Heart left ventricle (tissue), 16 donors: ENCODE measurements at regions of chr18 and their contacts with region 1.

Region 1: GRCh38 chr18:75209129-75209950 is at the start of gene PTGR3:
- DNase-seq: peak; percentile 92 to 94 (median 93)
- ATAC-seq: peak; percentile 65 to 84 (median 75)
- H3K4me3 ChIP-seq: peak within 1 kb of the TSS; percentile 61 to 99 (median 96)
- H3K27ac ChIP-seq: peak within 1 kb of the TSS; percentile 96 to 100 (median 99)
- H3K4me1 ChIP-seq: peaks cover 7 to 63% (median 53%) of the 10 kb centered on the region in 12 donors
- H3K27me3 ChIP-seq: no peaks in the 10 kb centered on the region
- CTCF ChIP-seq: no peak
- POLR2A ChIP-seq: peak in 1 of 2 donors; percentile 56
- total RNA-seq, gene PTGR3: 35.3 to 58.2 (median 49.4) TPM

Region 2: DNA sequence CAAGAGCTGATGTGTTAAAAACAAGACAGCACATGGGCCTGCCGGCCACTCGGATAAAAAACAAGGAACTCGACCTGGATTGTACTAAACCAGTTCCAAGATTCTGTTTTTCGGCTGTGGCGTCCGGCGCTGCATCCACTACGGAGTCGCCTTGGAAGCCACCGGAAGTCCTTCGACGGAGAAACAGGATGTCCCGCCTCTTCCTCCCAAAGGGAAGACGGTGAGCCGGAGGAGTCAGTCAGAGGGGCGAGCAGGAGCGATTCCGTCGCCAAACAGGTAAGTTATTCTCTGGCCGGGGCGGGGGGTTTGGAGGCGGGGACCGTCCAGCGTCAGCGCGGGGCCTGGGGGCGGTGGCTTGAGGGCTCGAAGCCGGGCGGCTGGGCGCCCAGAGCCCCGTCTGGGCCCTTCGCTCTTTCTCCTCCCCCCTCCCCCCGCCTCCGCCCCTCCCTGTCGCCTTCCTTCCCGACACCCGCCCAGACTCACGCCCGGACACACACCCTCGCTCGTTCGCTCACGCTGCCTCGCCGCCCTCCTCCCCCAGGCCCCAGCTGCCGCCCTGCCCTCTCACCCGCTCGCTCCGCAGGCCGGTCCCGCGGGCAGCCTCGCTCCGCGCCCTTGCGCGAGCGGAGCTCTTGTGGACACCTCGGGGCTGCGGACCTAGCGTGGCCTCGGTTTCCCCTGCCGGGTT is 611.5 kb before region 1 on chr18 and contains the start of gene ZNF407:
- intact Hi-C with region 1: loop called in 1 of 10 experiments (anchors 5 kb)
- DNase-seq: peak; percentile 90 to 91 (median 90)
- ATAC-seq: peak; percentile 89 to 95 (median 93)
- H3K4me3 ChIP-seq: peak within 1 kb of the TSS; percentile 66 to 96 (median 86)
- H3K27ac ChIP-seq: peak within 1 kb of the TSS; percentile 93 to 99 (median 98)
- H3K4me1 ChIP-seq: peaks cover 3 to 38% (median 27%) of the 10 kb centered on the region in 12 donors
- H3K27me3 ChIP-seq: no peaks in the 10 kb centered on the region
- CTCF ChIP-seq: no peak
- POLR2A ChIP-seq: no peak
- total RNA-seq, gene ZNF407: 8.1 to 14.7 (median 12.3) TPM

Region 3: GRCh38 chr18:75041586-75041985 is 167.8 kb before region 1 on chr18:
- intact Hi-C with region 1: loop called in 1 of 10 experiments (anchors 10 kb)
- DNase-seq: no peak
- ATAC-seq: no peak
- H3K4me3 ChIP-seq: no peak overlapping the region
- H3K27ac ChIP-seq: no peak overlapping the region
- H3K4me1 ChIP-seq: peaks cover 0 to 10% (median 0%) of the 10 kb centered on the region in 12 donors
- H3K27me3 ChIP-seq: no peaks in the 10 kb centered on the region
- CTCF ChIP-seq: peak in 9 of 12 donors; percentile 7 to 33 (median 22)
- POLR2A ChIP-seq: no peak

Region 4: GRCh38 chr18:75167759-75168618 is 41.4 kb before region 1 on chr18:
- intact Hi-C with region 1: loop called in 5 of 10 experiments (anchors 2 to 5 kb)
- DNase-seq: peak; percentile 37 to 78 (median 44)
- ATAC-seq: peak in 3 of 4 donors; percentile 41 to 58 (median 44)
- H3K4me3 ChIP-seq: peak overlapping the region in 10 of 12 donors; percentile 7 to 40 (median 32)
- H3K27ac ChIP-seq: peak overlapping the region in 11 of 12 donors; percentile 19 to 92 (median 61)
- H3K4me1 ChIP-seq: peaks cover 0 to 23% (median 7%) of the 10 kb centered on the region in 12 donors
- H3K27me3 ChIP-seq: no peaks in the 10 kb centered on the region
- CTCF ChIP-seq: no peak
- POLR2A ChIP-seq: no peak

Region 5: DNA sequence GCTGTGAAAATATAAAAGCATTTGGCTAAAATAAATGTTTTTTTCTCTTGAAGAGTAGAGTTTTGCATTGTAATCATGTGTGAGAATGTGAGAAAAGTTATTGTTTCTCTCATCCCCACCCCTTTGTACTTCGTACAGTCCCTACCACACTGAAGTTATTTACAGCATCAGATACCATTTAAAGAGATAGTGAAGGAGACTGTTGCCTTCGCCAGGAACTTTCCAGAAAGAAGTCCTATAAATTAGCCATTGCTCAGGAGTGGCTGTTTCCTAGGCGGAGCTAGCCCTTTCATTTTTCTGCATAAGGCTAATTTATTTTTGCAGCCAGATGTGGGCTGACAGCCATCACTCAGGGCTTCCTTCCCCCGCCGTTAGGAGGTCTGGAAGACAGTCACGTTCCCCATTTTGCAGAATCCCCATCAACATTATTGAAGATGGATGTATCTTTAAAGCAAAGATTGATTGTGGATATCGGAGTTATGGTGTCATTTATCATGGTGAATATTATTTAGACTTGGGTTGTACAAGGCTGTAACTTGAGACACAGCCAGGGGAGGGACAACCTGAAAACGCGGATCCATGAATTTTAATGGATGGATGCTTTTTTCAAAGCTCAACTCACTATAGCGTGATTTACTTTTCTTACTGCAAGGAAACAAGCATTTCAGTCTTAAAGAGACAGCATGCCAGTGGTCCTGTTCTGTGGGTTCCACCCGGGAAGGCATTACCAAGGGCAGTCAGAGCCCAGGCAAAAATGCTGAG is 18.4 kb after region 1 on chr18:
- intact Hi-C with region 1: loop called in 1 of 10 experiments (anchors 1 kb)
- DNase-seq: no peak
- ATAC-seq: peak; percentile 30 to 56 (median 43)
- H3K4me3 ChIP-seq: peak overlapping the region in 8 of 12 donors; percentile 13 to 46 (median 35)
- H3K27ac ChIP-seq: peak overlapping the region in 10 of 12 donors; percentile 13 to 60 (median 50)
- H3K4me1 ChIP-seq: peaks cover 0 to 66% (median 47%) of the 10 kb centered on the region in 12 donors
- H3K27me3 ChIP-seq: no peaks in the 10 kb centered on the region
- CTCF ChIP-seq: no peak
- POLR2A ChIP-seq: no peak

Region 6: GRCh38 chr18:75253784-75254183 is 44.4 kb after region 1 on chr18:
- intact Hi-C with region 1: loop called in 5 of 10 experiments (anchors 2 to 5 kb)
- DNase-seq: no peak
- ATAC-seq: peak in 2 of 4 donors; percentile 50 to 71
- H3K4me3 ChIP-seq: peak overlapping the region in 3 of 12 donors; percentile 0 to 29 (median 22)
- H3K27ac ChIP-seq: peak overlapping the region in 8 of 12 donors; percentile 19 to 64 (median 41)
- H3K4me1 ChIP-seq: peaks cover 0 to 70% (median 40%) of the 10 kb centered on the region in 12 donors
- H3K27me3 ChIP-seq: no peaks in the 10 kb centered on the region
- CTCF ChIP-seq: no peak
- POLR2A ChIP-seq: no peak

Region 7: DNA sequence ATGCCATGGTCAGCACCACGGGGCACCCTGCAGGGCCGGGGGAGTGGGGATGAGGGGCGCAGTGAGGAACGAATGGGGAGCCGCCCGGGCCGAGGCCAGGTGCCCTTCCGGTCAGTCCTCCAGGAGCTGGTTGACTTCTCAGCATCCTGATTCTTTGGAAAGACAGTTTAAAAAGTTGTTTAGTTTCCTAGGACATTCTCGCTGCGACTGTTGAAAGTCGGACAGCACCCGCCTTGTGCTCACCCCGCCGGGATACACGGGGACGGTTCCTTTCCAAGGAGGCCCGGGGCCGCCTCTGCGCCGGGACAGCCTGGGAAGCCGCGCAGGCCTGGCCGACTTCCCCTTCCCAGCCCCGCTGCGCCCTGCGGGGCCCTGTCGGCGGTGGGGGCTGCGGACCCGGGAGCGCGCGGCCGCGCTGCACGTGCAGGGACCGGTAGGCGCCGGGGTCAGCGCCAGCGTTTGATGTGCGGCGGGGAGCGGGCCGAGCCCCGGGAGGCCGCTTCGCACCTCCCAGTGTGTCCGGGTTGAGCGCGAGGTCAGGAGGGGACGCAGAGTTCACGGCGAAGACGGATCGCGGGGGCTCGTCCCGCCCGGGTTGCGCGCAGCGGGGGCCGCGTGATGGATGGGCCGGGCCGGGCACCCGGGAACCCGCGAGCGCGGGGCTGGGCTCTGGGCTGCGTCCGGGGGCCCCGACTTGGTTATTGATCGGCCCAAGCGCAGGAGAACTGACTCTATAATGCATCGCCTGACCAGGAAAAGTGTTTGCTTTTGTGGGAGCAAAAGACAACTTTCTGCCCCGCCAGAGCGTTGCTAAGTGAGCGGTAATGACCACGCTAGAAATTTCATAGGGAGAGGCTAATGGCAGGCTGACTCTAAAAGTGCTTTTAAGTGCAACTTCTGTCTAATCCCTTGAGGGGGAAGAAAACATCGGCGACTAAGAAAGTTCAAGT is 246.2 kb after region 1 on chr18:
- intact Hi-C with region 1: loop called in 1 of 10 experiments (anchors 5 kb)
- DNase-seq: peak in 2 of 5 donors; percentile 43 to 67
- ATAC-seq: peak; percentile 24 to 84 (median 83)
- H3K4me3 ChIP-seq: peak overlapping the region; percentile 41 to 70 (median 58)
- H3K27ac ChIP-seq: peak overlapping the region in 4 of 12 donors; percentile 31 to 45 (median 34)
- H3K4me1 ChIP-seq: peaks cover 0 to 14% (median 0%) of the 10 kb centered on the region in 12 donors
- H3K27me3 ChIP-seq: peaks cover 0 to 34% (median 0%) of the 10 kb centered on the region in 9 donors
- CTCF ChIP-seq: no peak
- POLR2A ChIP-seq: no peak